ENCODE measurements at regions of chr5 and their contacts with region 1.

Region 1: GRCh38 chr5:134140530-134141201 is 26.2 kb downstream of the TCF7 start:
- DNase-seq: peak in 9 of 10 donors; percentile 57 to 95 (median 68)

Region 2: DNA sequence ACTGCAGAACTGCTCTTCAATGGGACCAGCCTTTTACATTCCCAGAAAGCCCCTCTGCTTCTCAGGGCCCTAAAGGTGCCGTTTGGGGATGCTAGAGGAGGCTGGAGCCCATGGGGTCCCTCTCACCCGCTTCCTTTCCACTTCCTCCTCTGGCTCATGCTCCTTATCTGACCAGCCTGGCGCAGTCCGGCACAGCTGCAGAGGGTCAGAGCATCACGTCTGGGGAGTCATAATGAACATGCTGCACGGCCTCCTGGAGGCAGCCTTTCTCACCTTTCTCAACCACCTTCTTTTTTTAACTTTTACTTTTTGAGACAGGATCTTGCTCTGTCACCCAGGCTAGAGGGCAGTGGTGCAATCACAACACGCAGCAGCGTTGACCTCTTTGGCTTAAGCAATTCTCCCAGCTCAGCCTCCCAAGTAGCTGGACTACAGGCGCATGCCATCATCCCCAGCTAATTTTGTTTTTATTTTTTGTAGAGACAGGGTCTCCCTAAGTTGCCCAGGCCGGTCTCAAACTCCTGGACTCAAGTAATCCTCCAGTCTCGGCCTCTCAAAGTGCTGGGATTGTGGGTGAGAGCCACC is 41.3 kb before region 1 on chr5:
- intact Hi-C with region 1: loop called (anchors 2 kb)
- DNase-seq: no peak